Esophagus muscularis mucosa (tissue), 4 donors: ENCODE measurements at regions of chr11 and their contacts with region 1.

Region 1: GRCh38 chr11:76152086-76152681 is 54.1 kb downstream of the WNT11 start:
- DNase-seq: peak; percentile 96
- H3K4me3 ChIP-seq: peak overlapping the region; percentile 41 to 56 (median 48)
- H3K27ac ChIP-seq: no peak overlapping the region
- H3K4me1 ChIP-seq: peaks cover 7 to 22% (median 12%) of the 10 kb centered on the region in 4 donors
- H3K27me3 ChIP-seq: no peaks in the 10 kb centered on the region
- CTCF ChIP-seq: peak in 2 of 3 experiments; percentile 92 to 96
- EP300 ChIP-seq: no peak
- POLR2A ChIP-seq: no peak

Region 2: GRCh38 chr11:75733431-75734107 is 418.6 kb before region 1 on chr11:
- intact Hi-C with region 1: no loop called
- DNase-seq: no peak
- H3K4me3 ChIP-seq: no peak overlapping the region
- H3K27ac ChIP-seq: no peak overlapping the region
- H3K4me1 ChIP-seq: peaks cover 7 to 19% (median 14%) of the 10 kb centered on the region in 4 donors
- H3K27me3 ChIP-seq: no peaks in the 10 kb centered on the region
- CTCF ChIP-seq: no peak
- EP300 ChIP-seq: no peak
- POLR2A ChIP-seq: no peak

Region 3: GRCh38 chr11:75896843-75897419 is 255.3 kb before region 1 on chr11:
- intact Hi-C with region 1: loop called (anchors 2 kb)
- DNase-seq: no peak
- H3K4me3 ChIP-seq: no peak overlapping the region
- H3K27ac ChIP-seq: no peak overlapping the region
- H3K4me1 ChIP-seq: peaks cover 0 to 36% (median 35%) of the 10 kb centered on the region in 4 donors
- H3K27me3 ChIP-seq: no peaks in the 10 kb centered on the region
- CTCF ChIP-seq: peak; percentile 74 to 81 (median 81)
- EP300 ChIP-seq: no peak
- POLR2A ChIP-seq: no peak